ENCODE measurements at regions of chr1 and their contacts with region 1.

Region 1: DNA sequence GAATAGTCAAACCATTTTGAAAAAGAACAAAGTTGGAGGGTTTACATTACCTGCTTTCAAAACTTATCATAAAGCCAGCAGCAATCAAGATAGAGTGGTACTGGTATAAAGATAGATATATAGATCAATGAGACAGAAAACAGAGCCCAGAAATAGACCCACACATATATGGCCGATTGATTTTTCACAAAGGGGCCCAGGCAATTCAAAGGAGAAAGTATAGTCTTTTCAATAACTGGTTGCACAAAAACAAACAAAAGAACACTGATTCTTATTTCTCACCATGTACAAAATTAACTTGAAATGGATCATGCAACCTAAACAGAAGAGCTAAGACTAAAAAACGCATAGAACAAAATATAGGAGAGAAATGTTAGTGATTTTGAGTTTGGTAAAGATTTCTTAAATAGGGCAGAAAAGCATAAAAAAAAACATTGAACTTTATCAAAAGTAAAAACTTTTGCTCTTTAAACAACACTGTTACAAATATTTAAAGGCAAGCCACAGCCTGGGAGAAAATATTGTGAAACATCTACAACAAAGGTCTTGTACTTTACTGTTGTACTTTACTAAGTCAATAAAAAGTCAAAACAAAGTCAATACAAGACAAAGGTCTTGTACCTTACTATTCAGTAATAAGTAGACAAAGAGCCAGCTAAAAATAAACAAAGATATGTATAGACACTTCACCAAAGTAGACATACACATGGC is 50.2 kb downstream of the ST3GAL3 start:
- DNase-seq: no peak
- H3K4me3 ChIP-seq: no peak overlapping the region
- H3K27ac ChIP-seq: no peak overlapping the region
- H3K4me1 ChIP-seq: peaks cover 0 to 9% (median 0%) of the 10 kb centered on the region in 3 donors
- H3K27me3 ChIP-seq: no peaks in the 10 kb centered on the region
- CTCF ChIP-seq: no peak
- POLR2A ChIP-seq: no peak

Region 2: GRCh38 chr1:43529206-43529731 is 228.2 kb before region 1 on chr1:
- intact Hi-C with region 1: loop called (anchors 10 kb)
- DNase-seq: no peak
- H3K4me3 ChIP-seq: no peak overlapping the region
- H3K27ac ChIP-seq: peak overlapping the region in 2 of 4 donors; percentile 88 to 96
- H3K4me1 ChIP-seq: peaks cover 0 to 47% (median 27%) of the 10 kb centered on the region in 3 donors
- H3K27me3 ChIP-seq: peaks cover 0 to 17% (median 0%) of the 10 kb centered on the region in 4 donors
- CTCF ChIP-seq: peak; percentile 91 to 99 (median 96)
- POLR2A ChIP-seq: no peak

Measured in esophagus squamous epithelium (tissue), 5 donors.